IMR-90 (cell line): ENCODE measurements at regions of chr20 and their contacts with region 1.

Region 1: DNA sequence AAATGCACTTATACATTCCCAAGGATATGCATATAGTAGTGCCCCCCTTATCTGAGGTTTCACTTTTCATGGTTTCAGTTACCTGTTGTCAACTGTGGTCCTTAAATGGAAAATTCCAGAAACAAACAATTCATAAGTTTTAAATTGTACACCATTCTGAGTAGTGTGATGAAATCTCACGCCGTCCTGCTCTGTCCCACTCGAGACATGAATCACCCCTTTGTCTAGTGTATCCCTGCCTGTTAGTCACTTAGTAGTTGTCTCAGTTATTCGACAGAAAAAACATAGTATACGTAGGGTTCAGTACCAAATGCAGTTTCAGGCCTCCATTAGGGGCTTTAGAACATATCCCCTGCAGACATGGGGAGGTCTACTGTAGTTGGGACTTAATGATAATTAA is 57.0 kb downstream of the MAP1LC3A start:
- DNase-seq: peak; percentile 49
- ATAC-seq: peak; percentile 51; the same call in 1 of the 2 replicates
- H3K4me3 ChIP-seq: no peak overlapping the region
- H3K27ac ChIP-seq: no peak overlapping the region
- H3K4me1 ChIP-seq: 0 out of 2 replicates have a peak, but pooled peaks cover 3% of the 10 kb centered on the region
- H3K27me3 ChIP-seq: no peaks in the 10 kb centered on the region
- CTCF ChIP-seq: no peak
- POLR2A ChIP-seq: no peak
- RAD21 ChIP-seq: no peak

Region 2: GRCh38 chr20:34600892-34601653 is 14.4 kb before region 1 on chr20:
- CTCF ChIA-PET with region 1: no interaction called
- POLR2A ChIA-PET with region 1: no interaction called
- dilution Hi-C with region 1: no loop called
- in situ Hi-C with region 1: no loop called
- intact Hi-C with region 1: loop called (anchors 2 kb)
- DNase-seq: no peak
- ATAC-seq: no peak
- H3K4me3 ChIP-seq: no peak overlapping the region
- H3K27ac ChIP-seq: no peak overlapping the region
- H3K4me1 ChIP-seq: peaks cover 3% of the 10 kb centered on the region; the same call in 1 of the 2 replicates
- H3K27me3 ChIP-seq: no peaks in the 10 kb centered on the region
- CTCF ChIP-seq: no peak
- POLR2A ChIP-seq: no peak
- RAD21 ChIP-seq: no peak